ENCODE measurements at regions of chr17 and their contacts with region 1.

Region 1: DNA sequence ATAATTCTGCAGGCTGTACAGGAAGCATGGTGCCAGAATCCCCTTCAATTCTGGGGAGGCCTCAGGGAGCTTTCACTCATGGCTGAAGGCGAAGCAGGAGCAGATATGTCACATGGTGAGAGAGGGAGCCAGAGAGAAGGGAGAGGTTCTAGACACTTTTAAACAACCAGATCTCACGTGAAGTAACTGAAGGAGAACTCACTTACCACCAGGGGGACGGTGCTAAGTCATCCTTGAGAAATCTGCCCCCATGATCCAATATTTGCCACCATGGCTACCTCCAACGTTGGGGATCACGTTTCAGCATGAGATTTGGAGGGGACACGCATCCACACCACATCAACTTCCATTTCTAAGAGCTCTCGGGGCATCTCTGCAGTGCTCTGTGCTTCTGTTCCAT is 37.4 kb upstream of the GNA13 start:
- DNase-seq: no peak
- ATAC-seq: no peak
- H3K4me3 ChIP-seq: no peak overlapping the region
- H3K27ac ChIP-seq: no peak overlapping the region
- H3K4me1 ChIP-seq: no peaks in the 10 kb centered on the region
- H3K27me3 ChIP-seq: peaks cover 8% of the 10 kb centered on the region
- CTCF ChIP-seq: peak; percentile 22; the same call in 1 of the 2 replicates
- POLR2A ChIP-seq: no peak
- RAD21 ChIP-seq: no peak

Region 2: GRCh38 chr17:65122836-65123756 is 29.2 kb after region 1 on chr17:
- CTCF ChIA-PET with region 1: no interaction called
- POLR2A ChIA-PET with region 1: interaction called, 16 read pairs
- dilution Hi-C with region 1: no loop called
- in situ Hi-C with region 1: no loop called
- intact Hi-C with region 1: no loop called
- DNase-seq: peak; percentile 90
- ATAC-seq: peak; percentile 97
- H3K4me3 ChIP-seq: peak overlapping the region; percentile 55
- H3K27ac ChIP-seq: peak overlapping the region; percentile 98
- H3K4me1 ChIP-seq: peaks cover 8% of the 10 kb centered on the region
- H3K27me3 ChIP-seq: no peaks in the 10 kb centered on the region
- CTCF ChIP-seq: no peak
- POLR2A ChIP-seq: peak; percentile 83
- RAD21 ChIP-seq: no peak

Region 3: GRCh38 chr17:65794572-65794971 is 700.6 kb after region 1 on chr17:
- CTCF ChIA-PET with region 1: no interaction called
- POLR2A ChIA-PET with region 1: no interaction called
- dilution Hi-C with region 1: no loop called
- in situ Hi-C with region 1: no loop called
- intact Hi-C with region 1: no loop called
- DNase-seq: peak; percentile 13
- ATAC-seq: no peak
- H3K4me3 ChIP-seq: no peak overlapping the region
- H3K27ac ChIP-seq: no peak overlapping the region
- H3K4me1 ChIP-seq: no peaks in the 10 kb centered on the region
- H3K27me3 ChIP-seq: no peaks in the 10 kb centered on the region
- CTCF ChIP-seq: peak; percentile 41; the same call in 1 of the 2 replicates
- POLR2A ChIP-seq: no peak
- RAD21 ChIP-seq: peak; percentile 40

Measured in IMR-90 (cell line).